Mammary epithelial cell (primary cell): ENCODE measurements at regions of chr6 and their contacts with region 1.

Region 1: GRCh38 chr6:55868771-55869479 is 6.5 kb downstream of the BMP5 start:
- DNase-seq: peak; percentile 99
- H3K4me3 ChIP-seq: peak overlapping the region in 1 of 3 experiments; percentile 33
- H3K27ac ChIP-seq: peak overlapping the region; percentile 89
- H3K4me1 ChIP-seq: peaks cover 35% of the 10 kb centered on the region
- H3K27me3 ChIP-seq: no peaks in the 10 kb centered on the region
- CTCF ChIP-seq: no peak

Region 2: DNA sequence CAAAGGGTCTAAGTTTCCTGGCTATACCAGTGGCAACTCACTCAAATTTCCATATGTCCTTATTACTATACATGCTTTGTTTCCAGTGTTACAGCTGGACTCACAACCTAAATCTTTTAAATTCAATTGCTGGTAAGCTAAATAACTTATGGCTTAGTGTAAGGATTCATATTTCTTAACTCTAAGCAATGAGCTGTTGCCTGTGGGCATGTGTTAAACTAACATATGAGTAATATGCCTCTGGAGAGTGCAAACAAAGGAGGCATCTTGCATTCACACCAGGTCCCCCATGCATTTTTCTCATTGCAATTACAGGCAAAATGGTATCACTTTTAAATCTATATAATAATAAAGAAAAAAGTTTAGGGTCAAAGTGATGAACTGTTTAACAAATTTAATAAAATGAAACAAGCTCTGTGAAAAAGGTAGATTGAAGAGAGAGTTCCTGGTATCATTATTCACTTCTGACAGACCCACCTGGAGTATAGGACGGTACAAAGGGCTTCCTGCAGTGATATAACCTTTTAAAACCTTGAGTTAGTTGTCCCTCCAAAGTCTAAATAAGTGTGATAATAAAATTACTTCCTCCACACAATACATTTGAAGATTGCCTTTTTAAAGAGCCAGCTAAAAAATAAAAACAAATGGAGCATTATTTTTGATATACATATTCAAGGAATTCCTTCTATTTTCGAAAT is 232.4 kb before region 1 on chr6:
- CTCF ChIA-PET with region 1: no interaction called
- dilution Hi-C with region 1: no loop called
- in situ Hi-C with region 1: no loop called
- intact Hi-C with region 1: loop called (anchors 5 kb)
- DNase-seq: peak; percentile 75
- H3K4me3 ChIP-seq: no peak overlapping the region
- H3K27ac ChIP-seq: no peak overlapping the region
- H3K4me1 ChIP-seq: peaks cover 8% of the 10 kb centered on the region
- H3K27me3 ChIP-seq: no peaks in the 10 kb centered on the region
- CTCF ChIP-seq: no peak

Region 3: GRCh38 chr6:55825402-55826051 is 43.4 kb before region 1 on chr6:
- CTCF ChIA-PET with region 1: no interaction called
- dilution Hi-C with region 1: no loop called
- in situ Hi-C with region 1: no loop called
- intact Hi-C with region 1: loop called (anchors 2 kb)
- DNase-seq: peak; percentile 83
- H3K4me3 ChIP-seq: no peak overlapping the region
- H3K27ac ChIP-seq: peak overlapping the region; percentile 81
- H3K4me1 ChIP-seq: peaks cover 38% of the 10 kb centered on the region
- H3K27me3 ChIP-seq: no peaks in the 10 kb centered on the region
- CTCF ChIP-seq: no peak